ENCODE measurements at regions of chr15 and their contacts with region 1.

Region 1: GRCh38 chr15:65323071-65323511 is 18.6 kb downstream of the RNU5B-1 start:
- DNase-seq: no peak
- ATAC-seq: no peak
- H3K4me3 ChIP-seq: no peak overlapping the region
- H3K27ac ChIP-seq: no peak overlapping the region
- H3K4me1 ChIP-seq: no peaks in the 10 kb centered on the region
- H3K27me3 ChIP-seq: no peaks in the 10 kb centered on the region
- CTCF ChIP-seq: no peak

Region 2: DNA sequence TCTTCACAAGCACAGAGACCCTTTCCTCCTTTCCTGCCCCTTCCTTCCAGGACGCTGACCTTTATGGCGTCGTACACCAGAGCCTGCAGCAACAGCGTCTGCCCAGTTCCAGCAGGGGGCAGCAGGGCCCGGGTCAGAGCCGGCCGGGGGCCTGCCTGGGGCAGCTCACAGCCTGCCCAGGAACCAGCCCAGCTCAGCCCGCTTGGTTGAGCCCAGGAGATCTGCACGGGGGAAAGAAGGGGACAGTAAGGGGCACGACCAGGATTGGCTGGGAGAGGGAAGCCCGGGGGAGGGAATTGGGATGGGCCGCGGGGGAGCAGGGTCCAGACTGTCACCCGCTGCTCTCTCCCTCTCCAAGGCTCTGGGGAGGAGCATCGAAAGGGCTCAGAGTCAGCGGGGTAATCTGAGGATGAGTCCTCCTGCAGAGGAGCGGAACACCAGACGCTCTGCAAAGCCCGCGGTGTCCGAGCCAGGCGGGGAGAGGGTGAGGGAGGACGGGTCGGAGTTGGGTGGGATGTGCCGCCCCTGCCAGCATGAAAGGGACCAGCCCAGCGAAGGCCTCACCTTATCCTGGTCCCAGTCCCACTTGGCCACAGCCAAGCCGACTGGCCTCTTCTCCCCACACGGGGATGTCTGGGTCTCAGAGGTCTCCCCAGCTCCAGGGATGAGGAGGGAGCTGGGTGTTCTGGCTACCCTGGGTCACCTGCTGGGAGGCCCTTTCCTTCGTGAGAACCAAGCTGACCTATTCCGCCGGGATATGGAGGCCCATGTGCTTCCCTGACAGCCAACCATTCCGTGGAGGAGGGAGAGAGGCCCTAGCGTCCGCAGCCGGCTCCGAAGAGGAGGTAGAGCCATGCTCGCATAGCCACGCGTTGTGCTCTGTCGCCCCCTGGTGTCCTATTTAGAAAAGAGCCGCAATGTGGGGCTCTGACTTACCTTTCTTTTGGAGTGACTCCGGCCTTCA is 62.1 kb after region 1 on chr15:
- intact Hi-C with region 1: loop called (anchors 5 kb)
- DNase-seq: peak; percentile 88
- ATAC-seq: peak; percentile 95
- H3K4me3 ChIP-seq: peak overlapping the region; percentile 27
- H3K27ac ChIP-seq: no peak overlapping the region
- H3K4me1 ChIP-seq: no peaks in the 10 kb centered on the region
- H3K27me3 ChIP-seq: peaks cover 13% of the 10 kb centered on the region
- CTCF ChIP-seq: peak; percentile 81